Astrocyte of the cerebellum (primary cell): ENCODE measurements at regions of chr6 and their contacts with region 1.

Region 1: DNA sequence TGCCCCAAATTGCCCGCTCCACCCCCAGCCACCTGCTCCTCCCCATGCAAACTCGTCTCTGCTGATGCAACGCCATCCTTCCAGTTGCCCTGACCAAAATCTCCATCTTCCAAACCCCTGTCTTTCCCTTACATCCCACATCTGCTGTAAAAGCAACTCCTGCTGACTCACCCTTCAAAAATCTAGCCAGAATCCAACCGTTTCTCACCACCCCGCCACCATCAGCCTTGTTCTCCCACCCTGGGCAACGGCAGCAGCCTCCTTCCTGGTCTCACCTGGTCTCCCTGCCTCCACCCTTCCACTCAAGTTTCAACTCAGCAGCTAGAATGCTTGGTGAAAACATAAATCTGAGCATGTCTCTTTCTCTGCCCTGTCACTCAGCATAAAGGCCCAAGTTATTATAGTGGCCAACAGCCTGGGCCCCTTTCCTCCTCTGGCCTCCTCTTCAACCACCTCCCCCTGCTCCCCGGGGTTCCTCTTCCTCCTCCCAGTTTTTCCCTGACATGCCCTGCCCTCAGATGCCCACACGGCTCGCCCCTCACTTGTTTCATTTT is 7.2 kb upstream of the SYNJ2 start:
- DNase-seq: no peak
- H3K4me3 ChIP-seq: no peak overlapping the region
- CTCF ChIP-seq: no peak

Region 2: DNA sequence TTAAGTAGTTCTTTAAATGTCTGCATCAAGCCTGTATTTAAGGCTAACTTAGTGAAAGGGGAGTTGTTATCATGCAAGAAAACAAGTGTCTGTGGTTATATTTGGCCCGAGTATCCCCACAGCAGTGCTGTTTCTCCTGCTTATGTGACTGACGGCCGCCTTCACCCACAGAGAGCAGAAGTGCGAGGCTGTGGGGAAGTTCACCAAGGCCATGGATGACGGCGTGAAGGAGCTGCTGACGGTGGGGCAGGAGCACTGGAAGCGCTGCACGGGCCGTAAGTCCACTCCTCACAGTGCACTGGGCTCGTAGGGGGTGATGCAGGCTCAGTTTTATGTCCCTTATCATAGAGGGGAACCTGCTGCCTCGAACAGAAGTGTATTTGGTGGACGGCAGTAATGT is 46.0 kb before region 1 on chr6:
- in situ Hi-C with region 1: no loop called
- DNase-seq: no peak
- H3K4me3 ChIP-seq: no peak overlapping the region
- CTCF ChIP-seq: no peak

Region 3: DNA sequence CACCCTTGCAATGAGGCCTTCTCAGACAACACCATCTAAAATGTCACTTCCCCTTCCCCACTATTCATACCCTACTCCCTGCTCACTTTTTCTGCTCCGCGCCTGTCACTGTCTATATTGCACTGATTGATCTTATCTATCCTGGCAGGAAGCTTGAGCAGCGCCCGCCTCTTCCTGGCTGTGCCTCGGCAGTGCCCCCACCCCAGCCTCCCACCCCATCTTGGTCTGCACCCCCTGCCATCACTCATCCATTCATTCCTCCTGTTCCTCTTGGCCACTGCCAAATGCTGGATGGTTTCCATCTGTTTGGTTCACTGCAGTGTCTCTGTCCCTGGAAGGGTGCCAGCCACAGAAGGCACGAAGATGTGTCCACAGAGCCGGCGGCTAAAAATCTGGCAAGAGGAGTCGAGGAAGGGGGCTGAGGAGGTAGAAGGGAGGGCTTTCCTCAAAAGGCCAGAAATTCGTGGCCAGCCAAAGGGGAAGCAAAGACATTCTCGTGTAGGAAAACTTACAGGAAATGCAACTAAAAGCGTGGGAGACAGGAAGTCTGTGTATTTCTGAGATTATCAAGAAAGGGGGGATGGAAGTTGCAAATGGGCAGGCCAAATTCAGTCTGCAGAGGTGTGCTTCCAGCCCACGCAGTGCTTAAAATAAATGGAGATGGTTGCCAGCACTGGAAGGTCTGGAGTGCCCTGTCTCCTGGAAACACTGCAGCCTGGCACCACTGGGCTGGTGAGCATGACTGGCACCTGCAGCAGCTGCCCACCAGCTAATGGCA is 34.9 kb after region 1 on chr6:
- in situ Hi-C with region 1: no loop called
- DNase-seq: no peak
- H3K4me3 ChIP-seq: no peak overlapping the region
- CTCF ChIP-seq: no peak

Region 4: GRCh38 chr6:158026054-158026900 is 51.9 kb after region 1 on chr6:
- in situ Hi-C with region 1: loop called (anchors 5 kb)
- DNase-seq: peak; percentile 97
- H3K4me3 ChIP-seq: peak overlapping the region; percentile 2
- CTCF ChIP-seq: peak; percentile 64